ENCODE measurements at regions of chr2 and their contacts with region 1.

Region 1: DNA sequence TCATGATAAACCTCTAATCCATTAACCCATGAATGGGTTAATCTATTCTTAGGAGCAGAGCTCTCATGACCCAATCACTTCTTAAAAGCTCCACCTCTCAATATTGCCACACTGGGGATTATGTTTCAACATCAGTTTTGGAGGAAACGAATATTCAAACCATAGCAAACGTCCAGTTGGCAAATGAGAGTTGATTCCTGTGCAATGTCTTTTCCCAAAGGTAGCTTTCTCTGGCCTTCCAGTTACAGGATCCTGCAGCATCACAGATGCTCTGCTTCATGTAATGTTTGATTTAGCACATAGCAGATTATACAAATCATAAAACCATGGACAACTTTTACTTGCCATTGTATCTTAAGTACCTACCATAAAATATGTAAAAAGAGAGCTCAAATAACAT is 481.0 kb downstream of the TNS1 start:
- DNase-seq: no peak
- ATAC-seq: peak; percentile 83

Region 2: DNA sequence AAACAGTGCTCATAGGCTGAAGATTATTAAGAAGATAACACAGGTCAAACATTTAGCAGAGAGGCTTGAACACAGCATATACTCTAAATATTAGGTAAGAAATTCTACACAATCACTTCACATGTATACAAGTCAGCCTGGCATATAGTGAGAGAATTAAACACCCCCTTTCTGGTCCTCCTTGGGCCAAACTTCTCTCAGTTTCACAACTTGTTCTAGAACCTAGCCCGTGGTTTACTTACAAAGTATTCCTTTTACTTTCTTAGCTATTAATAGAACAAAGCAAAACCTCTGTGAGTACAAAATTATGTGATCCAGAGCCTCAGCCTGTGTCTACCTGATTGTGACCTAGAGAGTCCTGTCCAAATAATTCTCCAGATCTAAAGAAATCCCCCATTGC is 81.8 kb before region 1 on chr2:
- intact Hi-C with region 1: no loop called
- DNase-seq: no peak
- ATAC-seq: no peak

Region 3: GRCh38 chr2:217713395-217714286 is 191.8 kb after region 1 on chr2:
- intact Hi-C with region 1: loop called (anchors 10 kb)
- DNase-seq: peak; percentile 92
- ATAC-seq: peak; percentile 90

Region 4: DNA sequence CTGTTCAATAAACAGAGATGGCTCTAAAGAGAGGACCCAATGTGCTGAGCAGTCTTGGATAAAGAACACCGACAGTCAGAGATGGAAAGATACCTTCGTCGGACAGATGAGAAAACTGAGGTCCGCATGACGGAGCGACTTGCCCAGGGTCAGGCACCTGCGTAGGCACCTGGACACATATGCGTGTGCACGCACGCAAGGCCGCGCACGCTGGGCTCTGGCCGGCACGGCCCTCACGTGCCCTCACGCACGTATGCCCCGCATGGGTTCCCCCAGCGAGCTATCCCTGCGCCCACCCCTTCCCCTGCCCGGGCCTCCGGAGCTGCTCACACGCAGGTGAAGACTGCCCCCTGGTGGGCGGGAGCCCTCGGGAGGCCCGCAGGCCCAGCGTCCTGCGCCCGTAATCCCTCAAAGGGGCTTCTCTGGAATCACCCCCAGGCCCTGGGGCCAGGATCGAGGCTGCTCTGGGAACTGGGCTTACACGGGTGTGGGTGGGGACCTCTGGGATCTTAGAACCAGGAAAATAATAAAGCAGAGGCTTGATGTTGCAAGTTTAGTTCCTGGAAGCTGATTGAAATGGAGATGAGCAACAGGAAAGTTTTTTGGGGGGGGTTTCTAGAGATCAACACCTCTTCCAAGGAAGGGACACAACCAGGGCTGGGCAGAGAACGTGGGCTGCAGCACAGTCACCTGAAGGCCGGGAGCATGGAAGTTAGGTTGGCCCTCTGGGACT is 234.7 kb after region 1 on chr2:
- intact Hi-C with region 1: no loop called
- DNase-seq: peak; percentile 93
- ATAC-seq: peak; percentile 92